IMR-90 (cell line): ENCODE measurements at regions of chr7 and their contacts with region 1.

Region 1: GRCh38 chr7:132836743-132837142 is 245.1 kb downstream of the CHCHD3 start:
- DNase-seq: peak; percentile 67
- ATAC-seq: no peak
- H3K4me3 ChIP-seq: no peak overlapping the region
- H3K27ac ChIP-seq: no peak overlapping the region
- H3K4me1 ChIP-seq: no peaks in the 10 kb centered on the region
- H3K27me3 ChIP-seq: no peaks in the 10 kb centered on the region
- CTCF ChIP-seq: no peak
- POLR2A ChIP-seq: no peak
- RAD21 ChIP-seq: no peak

Region 2: GRCh38 chr7:131556052-131556908 is 1280.5 kb before region 1 on chr7 and contains the start of gene PODXL:
- CTCF ChIA-PET with region 1: no interaction called
- POLR2A ChIA-PET with region 1: interaction called, 10 read pairs
- dilution Hi-C with region 1: no loop called
- in situ Hi-C with region 1: no loop called
- intact Hi-C with region 1: no loop called
- DNase-seq: peak; percentile 17
- ATAC-seq: peak; percentile 91
- H3K4me3 ChIP-seq: peak within 1 kb of the TSS; percentile 65
- H3K27ac ChIP-seq: no peak within 1 kb of the TSS
- H3K4me1 ChIP-seq: 0 out of 2 replicates have a peak, but pooled peaks cover 4% of the 10 kb centered on the region
- H3K27me3 ChIP-seq: peaks cover 33% of the 10 kb centered on the region; the same call in 1 of the 2 replicates
- CTCF ChIP-seq: no peak
- POLR2A ChIP-seq: no peak
- RAD21 ChIP-seq: no peak
- total RNA-seq, gene PODXL: 1.3 and 1.4 TPM in 2 replicates

Region 3: DNA sequence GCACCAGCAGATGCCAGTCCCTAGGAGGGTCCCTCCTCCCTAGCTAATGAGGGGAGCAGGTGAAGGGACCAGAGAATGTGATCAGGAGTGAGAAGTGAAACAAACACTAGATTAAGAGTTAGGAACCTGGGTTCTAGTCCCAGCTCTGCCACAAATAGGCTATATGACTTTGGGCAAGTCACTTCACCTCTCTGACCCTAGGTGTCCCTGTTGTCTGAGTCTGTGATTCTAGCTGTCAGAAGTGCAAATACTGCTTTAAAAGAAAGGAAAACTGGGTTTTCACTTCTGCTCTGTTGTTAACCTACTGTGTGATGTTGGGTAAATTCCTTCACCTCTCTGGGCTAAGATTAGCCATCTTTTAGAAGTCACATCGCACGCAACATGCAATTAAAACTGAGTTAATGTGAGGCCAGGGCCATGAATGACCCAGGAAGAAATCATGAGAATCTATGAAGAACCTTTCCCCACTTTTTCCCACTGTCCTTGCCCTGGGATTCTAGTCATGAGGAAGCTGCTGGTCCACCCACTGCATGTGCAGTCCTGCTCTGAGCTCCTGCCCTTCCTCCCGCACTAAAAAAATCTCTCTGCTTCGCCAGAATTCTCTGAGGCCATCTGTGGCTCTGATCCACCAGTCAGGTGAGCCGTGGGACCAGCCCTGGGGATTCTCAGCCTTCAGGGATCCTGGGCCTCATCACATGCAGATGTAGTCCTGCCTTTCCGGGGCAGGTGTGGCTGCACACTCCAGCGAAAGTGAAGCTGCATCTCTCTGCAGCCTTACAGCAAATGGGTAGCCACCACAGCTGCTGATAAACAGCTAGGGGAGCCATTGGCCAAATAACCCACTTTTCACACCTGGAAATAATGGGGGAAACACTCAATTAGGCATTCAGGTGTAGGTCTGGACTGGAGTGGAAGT is 442.2 kb before region 1 on chr7:
- CTCF ChIA-PET with region 1: no interaction called
- POLR2A ChIA-PET with region 1: no interaction called
- dilution Hi-C with region 1: no loop called
- in situ Hi-C with region 1: no loop called
- intact Hi-C with region 1: no loop called
- DNase-seq: no peak
- ATAC-seq: no peak
- H3K4me3 ChIP-seq: no peak overlapping the region
- H3K27ac ChIP-seq: no peak overlapping the region
- H3K4me1 ChIP-seq: no peaks in the 10 kb centered on the region
- H3K27me3 ChIP-seq: no peaks in the 10 kb centered on the region
- CTCF ChIP-seq: no peak
- POLR2A ChIP-seq: no peak
- RAD21 ChIP-seq: no peak